ENCODE measurements at regions of chr1 and their contacts with region 1.

Region 1: DNA sequence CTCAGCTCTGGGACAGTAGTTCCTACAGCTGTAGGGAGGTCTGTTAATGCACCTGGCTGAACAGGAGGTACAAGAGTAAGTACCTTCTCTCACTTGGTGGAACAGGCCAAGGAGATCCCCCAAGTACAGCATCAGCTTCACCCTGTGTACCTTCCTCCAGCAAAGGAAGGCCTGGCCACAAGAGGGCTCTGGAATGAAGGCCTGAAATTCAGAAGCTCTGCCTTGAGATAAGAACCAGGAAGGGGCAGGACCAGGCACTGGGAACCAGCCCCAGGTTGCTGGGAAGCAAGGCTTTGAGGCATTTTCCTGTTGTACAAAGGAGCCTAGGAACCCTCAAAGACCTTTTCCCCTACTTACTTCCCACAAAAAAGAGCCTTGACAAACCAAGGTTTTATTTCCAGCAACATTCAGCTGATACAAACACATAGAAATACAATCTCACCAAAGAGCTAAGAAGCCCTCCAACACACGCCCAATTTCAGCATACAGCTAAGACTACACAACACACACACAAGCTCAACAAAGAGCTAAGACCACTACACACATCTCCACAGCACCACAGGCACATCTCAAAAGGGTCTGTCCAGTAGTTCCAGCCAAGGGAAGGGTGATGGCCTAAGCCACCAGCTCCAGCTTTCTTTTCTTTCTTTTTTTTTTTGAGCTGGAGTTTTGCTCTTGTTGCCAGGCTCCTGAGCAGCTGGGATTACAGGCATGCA is 23.5 kb downstream of the F11R start:
- DNase-seq: peak; percentile 69
- ATAC-seq: peak; percentile 82
- H3K4me3 ChIP-seq: no peak overlapping the region
- H3K4me3 Mint-ChIP-seq: no peak overlapping the region
- H3K27ac ChIP-seq: peak overlapping the region; percentile 15 to 51
- H3K27ac Mint-ChIP-seq: peak overlapping the region; percentile 68
- H3K4me1 ChIP-seq: peaks cover 0 to 5% of the 10 kb centered on the region in 2 donors
- H3K4me1 Mint-ChIP-seq: peaks cover 4% of the 10 kb centered on the region
- H3K27me3 ChIP-seq: no peaks in the 10 kb centered on the region
- H3K27me3 Mint-ChIP-seq: no peaks in the 10 kb centered on the region
- CTCF ChIP-seq: peak; percentile 52

Region 2: DNA sequence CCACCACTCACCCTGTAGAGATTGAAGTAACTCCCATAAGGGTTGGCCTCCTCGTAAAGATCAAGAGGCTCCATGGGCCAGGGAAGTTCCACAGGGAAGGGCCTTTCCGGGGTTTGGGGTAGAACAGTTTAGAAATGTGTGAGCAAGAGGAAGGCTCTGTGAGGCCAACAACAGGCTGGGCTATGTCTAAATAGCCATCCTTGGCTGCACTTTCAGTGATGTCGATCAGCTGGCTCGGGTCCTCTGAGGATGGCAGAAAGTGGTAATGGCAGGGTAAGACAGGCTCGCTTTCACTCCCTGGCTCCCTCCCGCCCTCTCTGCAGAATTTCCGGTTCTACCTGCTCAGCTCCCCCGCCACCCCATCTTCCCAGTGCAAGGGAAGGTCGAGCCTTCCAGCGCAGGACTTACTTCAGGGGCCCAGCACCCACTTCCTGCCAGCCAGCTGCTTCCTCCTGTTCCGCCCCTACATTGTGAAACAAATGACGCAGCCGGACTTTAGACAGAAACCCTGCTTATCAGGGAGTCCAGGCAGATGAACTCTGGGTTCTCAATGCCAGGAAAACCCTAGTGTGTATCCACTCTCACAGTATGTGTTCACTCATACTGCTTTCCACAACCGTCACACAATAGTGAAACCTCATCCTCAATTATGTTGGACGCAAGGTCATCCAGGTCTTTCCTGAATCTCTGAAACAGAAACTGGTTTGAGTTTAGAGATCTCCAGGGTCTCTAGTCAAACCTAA is 16.2 kb after region 1 on chr1:
- CTCF ChIA-PET with region 1: interaction called, 45 read pairs
- POLR2A ChIA-PET with region 1: interaction called, 5 read pairs
- intact Hi-C with region 1: no loop called
- DNase-seq: peak; percentile 80
- ATAC-seq: peak; percentile 83
- H3K4me3 ChIP-seq: peak overlapping the region; percentile 20 to 65 (median 52)
- H3K4me3 Mint-ChIP-seq: peak overlapping the region; percentile 89
- H3K27ac ChIP-seq: peak overlapping the region; percentile 76 to 86
- H3K27ac Mint-ChIP-seq: peak overlapping the region; percentile 99
- H3K4me1 ChIP-seq: peaks cover 19 to 25% of the 10 kb centered on the region in 2 donors
- H3K4me1 Mint-ChIP-seq: peaks cover 22% of the 10 kb centered on the region
- H3K27me3 ChIP-seq: no peaks in the 10 kb centered on the region
- H3K27me3 Mint-ChIP-seq: no peaks in the 10 kb centered on the region
- CTCF ChIP-seq: no peak

Region 3: DNA sequence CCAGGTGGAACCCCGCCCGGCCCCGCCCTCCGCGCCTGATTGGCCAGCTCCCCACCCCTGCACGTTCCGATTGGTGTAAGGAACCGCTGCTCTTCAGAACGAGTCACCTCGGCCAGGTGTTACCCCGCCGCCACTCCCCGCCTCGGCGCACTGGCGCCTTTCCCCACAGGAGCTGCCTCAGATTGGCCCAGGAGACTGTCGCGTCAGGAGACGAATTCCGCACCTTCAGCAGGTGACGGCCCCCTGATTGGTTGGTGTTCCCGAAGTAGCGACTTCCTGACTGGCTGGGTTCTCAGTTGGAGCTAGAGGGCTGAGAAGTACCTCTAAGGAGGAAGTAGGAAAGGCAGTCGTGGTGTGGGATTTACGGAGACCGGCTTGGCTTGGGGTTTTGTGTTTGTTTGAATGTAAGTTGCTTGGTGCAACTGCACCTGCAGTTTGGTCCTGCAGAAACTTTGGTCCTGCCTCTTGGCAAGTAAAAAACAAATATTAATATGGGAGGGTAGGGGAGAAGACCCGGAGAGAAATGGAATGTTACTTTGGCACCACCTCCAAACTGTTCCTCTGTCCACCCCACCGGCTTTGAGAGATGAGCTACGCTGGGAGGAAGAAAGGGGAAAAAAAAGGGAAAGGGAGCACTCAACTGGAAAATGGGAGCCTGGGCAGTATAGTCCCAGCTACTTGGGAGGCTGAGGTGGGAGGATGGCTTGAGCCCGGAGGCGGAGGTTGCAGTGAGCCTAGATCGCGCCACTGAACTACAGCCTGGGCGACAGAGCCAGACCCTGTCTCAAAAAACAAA is 23.9 kb after region 1 on chr1:
- CTCF ChIA-PET with region 1: interaction called, 24 read pairs
- POLR2A ChIA-PET with region 1: interaction called, 5 read pairs
- intact Hi-C with region 1: no loop called
- DNase-seq: peak; percentile 92
- ATAC-seq: peak; percentile 93
- H3K4me3 ChIP-seq: peak overlapping the region; percentile 50 to 83 (median 81)
- H3K4me3 Mint-ChIP-seq: peak overlapping the region; percentile 96
- H3K27ac ChIP-seq: peak overlapping the region; percentile 55 to 85
- H3K27ac Mint-ChIP-seq: peak overlapping the region; percentile 91
- H3K4me1 ChIP-seq: peaks cover 22 to 23% of the 10 kb centered on the region in 2 donors
- H3K4me1 Mint-ChIP-seq: peaks cover 26% of the 10 kb centered on the region
- H3K27me3 ChIP-seq: no peaks in the 10 kb centered on the region
- H3K27me3 Mint-ChIP-seq: no peaks in the 10 kb centered on the region
- CTCF ChIP-seq: no peak

Region 4: DNA sequence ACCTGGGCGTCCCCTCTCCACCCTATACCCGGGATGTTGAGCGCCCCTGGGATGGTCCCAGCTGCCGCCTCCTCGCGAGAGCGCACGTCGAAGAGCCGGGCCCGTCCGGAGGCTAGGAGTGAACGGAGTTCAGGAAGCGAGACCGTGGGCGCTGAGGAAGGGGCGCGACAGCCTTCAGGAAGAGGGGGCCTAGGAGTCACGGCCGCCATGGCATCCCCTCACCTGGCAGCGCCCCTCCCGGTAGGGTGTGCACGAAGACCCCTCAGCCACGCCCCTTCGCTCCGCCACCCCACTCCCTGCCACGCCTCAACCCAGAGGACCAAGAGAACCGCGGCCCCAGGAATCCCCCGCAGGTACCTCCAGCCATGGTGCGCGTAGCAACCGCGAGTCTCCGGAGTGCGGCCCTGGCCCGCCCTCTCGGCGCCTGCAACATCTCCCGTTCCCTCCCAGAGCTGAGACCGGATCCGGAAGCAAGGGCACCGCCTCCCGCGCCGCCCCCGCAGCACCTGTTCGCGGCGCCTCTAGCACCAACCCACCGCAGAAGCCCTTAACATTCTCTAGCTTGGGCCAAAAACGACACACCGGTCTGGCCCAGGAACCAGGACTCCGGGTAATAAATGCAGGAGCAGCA is 41.2 kb after region 1 on chr1 and contains the start of gene TSTD1:
- CTCF ChIA-PET with region 1: interaction called, 43 read pairs
- POLR2A ChIA-PET with region 1: no interaction called
- intact Hi-C with region 1: loop called (anchors 10 kb)
- DNase-seq: peak; percentile 94
- ATAC-seq: peak; percentile 88
- H3K4me3 ChIP-seq: peak within 1 kb of the TSS; percentile 56 to 98 (median 94)
- H3K4me3 Mint-ChIP-seq: peak within 1 kb of the TSS; percentile 93
- H3K27ac ChIP-seq: peak within 1 kb of the TSS; percentile 81 to 94
- H3K27ac Mint-ChIP-seq: peak within 1 kb of the TSS; percentile 97
- H3K4me1 ChIP-seq: peaks cover 50 to 75% of the 10 kb centered on the region in 2 donors
- H3K4me1 Mint-ChIP-seq: peaks cover 55% of the 10 kb centered on the region
- H3K27me3 ChIP-seq: no peaks in the 10 kb centered on the region
- H3K27me3 Mint-ChIP-seq: no peaks in the 10 kb centered on the region
- CTCF ChIP-seq: no peak
- total RNA-seq, gene TSTD1: 85.6 and 94.4 TPM in 2 replicates

Region 5: DNA sequence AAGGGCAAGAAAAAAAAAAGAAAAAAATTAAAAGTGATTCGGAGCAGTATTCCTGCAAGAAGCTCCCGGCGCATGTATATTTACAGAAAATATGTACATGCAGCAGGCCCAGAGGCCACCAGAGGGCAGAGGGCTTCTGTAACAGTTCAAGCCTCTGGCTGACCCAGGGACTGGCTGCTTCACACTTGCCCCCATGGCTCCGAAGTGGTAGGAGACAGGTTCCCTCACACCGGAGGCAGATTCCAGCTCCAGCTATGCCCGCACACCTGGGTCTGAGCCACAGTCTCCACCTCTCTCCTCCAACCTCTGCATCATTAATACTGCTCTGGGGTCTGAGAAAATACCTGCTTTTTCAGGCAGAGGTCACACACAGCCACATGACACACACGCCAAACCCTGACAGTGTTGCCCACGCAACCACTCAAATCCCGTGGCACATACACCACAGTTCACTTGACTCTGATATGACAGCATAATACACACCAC is 74.4 kb after region 1 on chr1:
- CTCF ChIA-PET with region 1: interaction called, 37 read pairs
- POLR2A ChIA-PET with region 1: no interaction called
- intact Hi-C with region 1: loop called (anchors 1 kb)
- DNase-seq: peak; percentile 71
- ATAC-seq: no peak
- H3K4me3 ChIP-seq: no peak overlapping the region
- H3K4me3 Mint-ChIP-seq: no peak overlapping the region
- H3K27ac ChIP-seq: no peak overlapping the region
- H3K27ac Mint-ChIP-seq: peak overlapping the region; percentile 12
- H3K4me1 ChIP-seq: peaks cover 20 to 35% of the 10 kb centered on the region in 2 donors
- H3K4me1 Mint-ChIP-seq: peaks cover 37% of the 10 kb centered on the region
- H3K27me3 ChIP-seq: no peaks in the 10 kb centered on the region
- H3K27me3 Mint-ChIP-seq: no peaks in the 10 kb centered on the region
- CTCF ChIP-seq: peak; percentile 81

Region 6: GRCh38 chr1:161139765-161140164 is 142.3 kb after region 1 on chr1:
- CTCF ChIA-PET with region 1: interaction called, 30 read pairs
- POLR2A ChIA-PET with region 1: no interaction called
- intact Hi-C with region 1: loop called (anchors 1 kb)
- DNase-seq: peak; percentile 62
- ATAC-seq: peak; percentile 31
- H3K4me3 ChIP-seq: no peak overlapping the region
- H3K4me3 Mint-ChIP-seq: no peak overlapping the region
- H3K27ac ChIP-seq: no peak overlapping the region
- H3K27ac Mint-ChIP-seq: no peak overlapping the region
- H3K4me1 ChIP-seq: no peaks in the 10 kb centered on the region
- H3K4me1 Mint-ChIP-seq: peaks cover 11% of the 10 kb centered on the region
- H3K27me3 ChIP-seq: no peaks in the 10 kb centered on the region
- H3K27me3 Mint-ChIP-seq: no peaks in the 10 kb centered on the region
- CTCF ChIP-seq: peak; percentile 54

Measured in B cell (primary cell).